ENCODE measurements at regions of chr15 and their contacts with region 1.

Region 1: DNA sequence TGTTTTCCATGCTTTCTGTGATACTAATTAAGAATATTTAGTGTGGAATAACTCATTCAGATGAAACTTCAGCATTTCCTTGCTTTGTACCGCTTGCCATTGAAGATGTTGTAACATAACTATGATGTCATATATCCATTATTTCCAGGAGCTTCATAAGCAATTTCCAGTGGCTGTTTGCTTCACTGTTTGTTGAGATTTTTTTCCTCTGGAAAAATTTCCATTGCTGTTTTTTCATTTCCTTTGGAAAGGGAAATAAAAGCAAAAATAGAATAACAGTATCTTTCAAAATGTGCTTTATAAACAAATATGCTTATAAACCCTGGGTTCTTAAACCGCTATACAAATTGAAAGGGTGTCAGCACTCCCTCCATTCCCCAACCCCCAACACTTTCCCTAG is 319.6 kb upstream of the SEMA6D start:
- DNase-seq: no peak
- H3K4me3 ChIP-seq: no peak overlapping the region
- H3K27ac ChIP-seq: peak overlapping the region in 2 of 8 donors; percentile 16 to 39
- H3K4me1 ChIP-seq: peaks cover 0 to 13% (median 0%) of the 10 kb centered on the region in 6 donors
- H3K27me3 ChIP-seq: no peaks in the 10 kb centered on the region
- CTCF ChIP-seq: no peak
- POLR2A ChIP-seq: no peak

Region 2: GRCh38 chr15:47273864-47274263 is 123.8 kb before region 1 on chr15:
- intact Hi-C with region 1: no loop called
- DNase-seq: no peak
- H3K4me3 ChIP-seq: no peak overlapping the region
- H3K27ac ChIP-seq: no peak overlapping the region
- H3K4me1 ChIP-seq: no peaks in the 10 kb centered on the region
- H3K27me3 ChIP-seq: no peaks in the 10 kb centered on the region
- CTCF ChIP-seq: no peak
- POLR2A ChIP-seq: no peak

Region 3: GRCh38 chr15:47473832-47474231 is 76.2 kb after region 1 on chr15:
- intact Hi-C with region 1: loop called (anchors 5 kb)
- DNase-seq: no peak
- H3K4me3 ChIP-seq: no peak overlapping the region
- H3K27ac ChIP-seq: peak overlapping the region in 5 of 8 donors; percentile 17 to 42 (median 28)
- H3K4me1 ChIP-seq: peaks cover 0 to 7% (median 2%) of the 10 kb centered on the region in 6 donors
- H3K27me3 ChIP-seq: no peaks in the 10 kb centered on the region
- CTCF ChIP-seq: no peak
- POLR2A ChIP-seq: no peak

Region 4: GRCh38 chr15:47506329-47507100 is 108.9 kb after region 1 on chr15:
- intact Hi-C with region 1: no loop called
- DNase-seq: no peak
- H3K4me3 ChIP-seq: no peak overlapping the region
- H3K27ac ChIP-seq: no peak overlapping the region
- H3K4me1 ChIP-seq: peaks cover 0 to 23% (median 4%) of the 10 kb centered on the region in 6 donors
- H3K27me3 ChIP-seq: no peaks in the 10 kb centered on the region
- CTCF ChIP-seq: no peak
- POLR2A ChIP-seq: no peak

Region 5: DNA sequence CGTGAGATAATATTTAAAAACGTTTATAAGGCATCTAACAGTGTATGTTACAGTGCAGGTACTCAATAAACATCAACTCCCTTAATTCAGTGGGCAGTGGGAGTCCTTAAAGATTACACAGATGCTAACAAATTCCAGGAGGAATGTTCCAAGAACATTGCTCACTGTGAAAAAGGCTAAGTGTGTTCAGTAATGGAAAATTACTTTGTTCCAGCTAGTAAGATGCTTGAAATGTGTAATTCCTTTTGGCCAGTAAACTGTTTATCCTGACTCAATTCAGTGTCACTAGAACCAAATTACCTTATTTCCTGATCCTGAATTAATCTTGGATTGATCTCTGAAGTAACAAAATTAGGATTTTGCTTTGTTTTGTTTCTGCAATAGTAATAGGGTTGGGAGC is 265.4 kb after region 1 on chr15:
- intact Hi-C with region 1: no loop called
- DNase-seq: no peak
- H3K4me3 ChIP-seq: no peak overlapping the region
- H3K27ac ChIP-seq: no peak overlapping the region
- H3K4me1 ChIP-seq: no peaks in the 10 kb centered on the region
- H3K27me3 ChIP-seq: no peaks in the 10 kb centered on the region
- CTCF ChIP-seq: no peak
- POLR2A ChIP-seq: no peak

Measured in spleen (tissue), 13 donors.